Activated naive CD4-positive, alpha-beta T cell treated with anti-CD3 and anti-CD28 coated beads for 36 hours (primary cell): ENCODE measurements at regions of chr9 and their contacts with region 1.

Region 1: GRCh38 chr9:105064315-105065097 is 136.6 kb upstream of the ABCA1 start:
- DNase-seq: peak; percentile 19
- H3K4me3 Mint-ChIP-seq: no peak overlapping the region
- H3K27ac Mint-ChIP-seq: no peak overlapping the region
- H3K4me1 Mint-ChIP-seq: peaks cover 24% of the 10 kb centered on the region
- H3K27me3 Mint-ChIP-seq: peaks cover 2% of the 10 kb centered on the region

Region 2: GRCh38 chr9:104836235-104836634 is 228.3 kb before region 1 on chr9:
- CTCF ChIA-PET with region 1: no interaction called
- intact Hi-C with region 1: no loop called
- DNase-seq: no peak
- H3K4me3 Mint-ChIP-seq: no peak overlapping the region
- H3K27ac Mint-ChIP-seq: no peak overlapping the region
- H3K4me1 Mint-ChIP-seq: peaks cover 18% of the 10 kb centered on the region
- H3K27me3 Mint-ChIP-seq: no peaks in the 10 kb centered on the region

Region 3: GRCh38 chr9:105087910-105088888 is 23.7 kb after region 1 on chr9:
- CTCF ChIA-PET with region 1: no interaction called
- intact Hi-C with region 1: no loop called
- DNase-seq: no peak
- H3K4me3 Mint-ChIP-seq: no peak overlapping the region
- H3K27ac Mint-ChIP-seq: no peak overlapping the region
- H3K4me1 Mint-ChIP-seq: no peaks in the 10 kb centered on the region
- H3K27me3 Mint-ChIP-seq: no peaks in the 10 kb centered on the region

Region 4: GRCh38 chr9:105114964-105115728 is 50.6 kb after region 1 on chr9:
- CTCF ChIA-PET with region 1: interaction called, 4 read pairs
- intact Hi-C with region 1: loop called (anchors 2 kb)
- DNase-seq: peak; percentile 68
- H3K4me3 Mint-ChIP-seq: no peak overlapping the region
- H3K27ac Mint-ChIP-seq: no peak overlapping the region
- H3K4me1 Mint-ChIP-seq: peaks cover 28% of the 10 kb centered on the region
- H3K27me3 Mint-ChIP-seq: no peaks in the 10 kb centered on the region

Region 5: GRCh38 chr9:105127863-105128220 is 63.3 kb after region 1 on chr9:
- CTCF ChIA-PET with region 1: no interaction called
- intact Hi-C with region 1: loop called (anchors 2 kb)
- DNase-seq: peak; percentile 74
- H3K4me3 Mint-ChIP-seq: no peak overlapping the region
- H3K27ac Mint-ChIP-seq: peak overlapping the region; percentile 28
- H3K4me1 Mint-ChIP-seq: peaks cover 44% of the 10 kb centered on the region
- H3K27me3 Mint-ChIP-seq: no peaks in the 10 kb centered on the region